Tibial artery (tissue), 4 donors: ENCODE measurements at regions of chr10 and their contacts with region 1.

Region 1: GRCh38 chr10:121734589-121735045 is 136.4 kb upstream of the FGFR2 start:
- DNase-seq: no peak
- H3K4me3 ChIP-seq: no peak overlapping the region
- H3K27ac ChIP-seq: no peak overlapping the region
- H3K4me1 ChIP-seq: peaks cover 0 to 2% (median 0%) of the 10 kb centered on the region in 4 donors
- H3K27me3 ChIP-seq: peaks cover 0 to 6% of the 10 kb centered on the region in 2 donors
- CTCF ChIP-seq: peak; percentile 37 to 43

Region 2: DNA sequence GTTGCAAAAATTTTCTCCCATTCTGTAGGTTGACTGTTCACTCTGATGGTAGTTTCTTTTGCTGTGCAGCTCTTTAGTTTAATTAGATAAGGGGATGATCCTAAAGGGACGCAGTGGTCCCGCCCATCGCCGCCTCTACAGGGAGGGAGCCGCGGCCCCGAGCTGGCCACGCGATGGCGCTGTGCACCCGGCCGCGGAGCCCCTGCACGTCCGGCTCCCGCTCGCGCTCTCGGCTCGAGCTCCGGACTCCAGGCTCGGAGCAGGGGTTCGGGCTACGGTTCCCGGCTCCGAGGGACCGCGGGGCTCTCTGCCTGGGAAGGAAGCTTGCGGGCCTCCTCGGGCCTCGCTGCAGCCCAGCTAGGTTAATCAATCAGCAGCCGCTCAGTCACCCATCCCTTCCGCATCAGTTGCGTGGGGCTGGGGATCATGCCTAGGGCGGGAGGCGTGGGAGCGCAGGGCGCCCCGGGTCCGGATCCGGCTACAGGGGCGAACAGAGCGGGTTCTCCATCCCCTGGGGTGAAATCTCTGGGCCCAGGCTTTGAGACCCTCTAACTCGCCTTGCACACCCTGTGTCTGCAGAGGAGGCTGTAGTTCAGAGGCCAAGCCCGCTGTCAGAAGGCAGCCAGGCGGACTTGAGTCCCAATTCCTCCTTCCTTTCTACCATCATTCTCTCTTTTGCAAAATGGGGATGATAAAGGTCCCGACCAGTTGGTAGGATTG is 785.6 kb before region 1 on chr10:
- intact Hi-C with region 1: loop called (anchors 5 kb)
- DNase-seq: peak; percentile 47 to 77
- H3K4me3 ChIP-seq: peak overlapping the region; percentile 44 to 56
- H3K27ac ChIP-seq: no peak overlapping the region
- H3K4me1 ChIP-seq: peaks cover 0 to 23% (median 11%) of the 10 kb centered on the region in 4 donors
- H3K27me3 ChIP-seq: peaks cover 0 to 19% of the 10 kb centered on the region in 2 donors
- CTCF ChIP-seq: peak; percentile 87 to 88

Region 3: GRCh38 chr10:121615435-121615793 is 119.2 kb before region 1 on chr10:
- intact Hi-C with region 1: loop called (anchors 10 kb)
- DNase-seq: no peak
- H3K4me3 ChIP-seq: no peak overlapping the region
- H3K27ac ChIP-seq: no peak overlapping the region
- H3K4me1 ChIP-seq: no peaks in the 10 kb centered on the region
- H3K27me3 ChIP-seq: peaks cover 0 to 13% of the 10 kb centered on the region in 2 donors
- CTCF ChIP-seq: no peak